Heart left ventricle (tissue), 16 donors: ENCODE measurements at regions of chr4 and their contacts with region 1.

Region 1: DNA sequence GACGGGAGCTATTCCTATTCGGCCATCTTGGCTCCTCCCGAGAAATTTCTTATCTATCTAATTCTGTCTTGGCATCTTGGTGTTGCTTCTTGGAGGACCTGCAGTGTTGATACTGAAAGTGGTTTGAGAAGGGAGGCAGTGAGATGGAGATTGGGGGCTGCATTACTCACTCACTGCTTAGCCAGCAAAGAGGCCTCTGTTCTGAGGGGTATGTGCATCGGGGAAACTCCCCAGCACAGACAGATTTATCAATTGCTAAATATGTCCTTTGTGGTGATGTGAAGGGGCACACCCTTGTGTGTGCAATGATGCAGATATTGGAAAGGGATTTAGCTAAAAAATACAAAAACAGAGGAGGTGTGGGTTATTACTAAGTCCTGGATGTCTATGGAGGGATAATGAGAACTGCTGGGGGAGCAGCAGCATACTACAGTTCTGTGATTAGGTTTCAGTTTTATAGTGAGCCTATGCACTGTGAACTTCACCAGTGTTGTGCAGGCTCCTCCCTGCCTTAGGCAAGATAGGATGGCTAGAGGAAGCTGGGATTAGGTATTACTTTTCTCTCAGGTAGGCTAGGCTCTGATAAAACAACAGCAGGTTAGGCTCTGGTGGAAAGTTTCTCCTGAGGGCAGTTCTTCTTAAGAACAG is 279.0 kb downstream of the HS3ST1 start:
- DNase-seq: no peak
- ATAC-seq: no peak
- H3K4me3 ChIP-seq: no peak overlapping the region
- H3K27ac ChIP-seq: no peak overlapping the region
- H3K4me1 ChIP-seq: no peaks in the 10 kb centered on the region
- H3K27me3 ChIP-seq: peaks cover 0 to 6% (median 0%) of the 10 kb centered on the region in 9 donors
- CTCF ChIP-seq: no peak
- POLR2A ChIP-seq: no peak

Region 2: GRCh38 chr4:10893395-10893794 is 256.3 kb before region 1 on chr4:
- intact Hi-C with region 1: loop called in 1 of 10 experiments (anchors 5 kb)
- DNase-seq: no peak
- ATAC-seq: no peak
- H3K4me3 ChIP-seq: no peak overlapping the region
- H3K27ac ChIP-seq: no peak overlapping the region
- H3K4me1 ChIP-seq: no peaks in the 10 kb centered on the region
- H3K27me3 ChIP-seq: peaks cover 0 to 4% (median 0%) of the 10 kb centered on the region in 9 donors
- CTCF ChIP-seq: peak in 7 of 12 donors; percentile 8 to 44 (median 33)
- POLR2A ChIP-seq: no peak